RWPE1 (cell line): ENCODE measurements at regions of chr10 and their contacts with region 1.

Region 1: DNA sequence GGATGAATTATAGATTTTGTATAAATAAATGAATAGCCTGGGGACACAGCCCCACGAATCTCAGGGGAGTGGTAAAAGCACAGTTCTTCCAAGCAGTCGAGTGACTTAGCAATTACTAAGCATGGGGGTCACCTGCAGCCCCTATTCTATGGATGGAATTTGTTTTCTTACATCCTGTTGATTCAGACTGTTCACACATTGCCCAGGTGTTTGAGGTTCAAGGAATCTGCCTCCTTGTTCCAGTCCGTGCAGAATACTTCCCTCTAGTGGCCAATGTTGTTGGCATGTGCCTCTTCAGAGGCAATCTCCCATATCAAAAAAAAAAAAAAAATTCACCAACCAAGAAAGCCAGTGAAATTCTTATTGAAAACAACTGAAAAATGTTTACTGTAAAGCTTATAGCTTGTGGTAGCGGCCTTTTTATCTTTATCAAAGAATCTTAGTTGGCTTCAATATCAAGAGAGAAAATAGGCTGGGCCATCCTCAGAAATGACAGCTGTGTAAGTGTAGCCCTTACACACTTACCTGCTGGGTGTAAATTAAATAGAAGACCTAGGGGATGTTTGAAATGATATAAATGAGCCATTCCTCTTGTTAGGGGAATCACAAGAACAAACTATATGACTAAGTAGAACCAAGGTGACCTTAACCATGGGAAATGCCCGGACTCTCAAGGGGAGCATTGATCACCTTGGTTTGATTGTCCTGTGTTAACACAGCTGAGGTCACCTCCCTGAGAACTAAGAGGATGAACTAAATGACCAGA is 7.8 kb downstream of the LIPM start:
- DNase-seq: peak; percentile 63
- H3K27ac ChIP-seq: no peak overlapping the region
- CTCF ChIP-seq: peak; percentile 77

Region 2: DNA sequence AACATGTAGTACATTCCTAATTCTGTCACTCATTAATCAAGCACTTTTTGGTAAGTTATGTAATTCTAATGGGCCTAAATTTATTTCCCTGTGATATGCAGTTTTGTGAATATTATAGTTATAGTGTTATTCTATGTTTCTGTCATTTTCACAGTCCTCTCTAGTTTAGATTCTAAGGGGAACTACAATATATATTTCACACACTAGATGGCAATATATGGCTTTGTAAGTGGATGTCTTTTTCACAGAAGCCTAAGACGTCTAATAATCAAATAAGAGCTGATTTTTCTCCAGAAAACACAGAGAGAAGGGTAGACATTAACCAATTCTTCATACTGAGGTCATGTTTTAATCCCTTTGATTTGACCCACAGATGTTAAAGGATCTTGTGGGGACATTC is 245.3 kb before region 1 on chr10:
- CTCF ChIA-PET with region 1: interaction called, 11 read pairs
- POLR2A ChIA-PET with region 1: no interaction called
- DNase-seq: peak; percentile 51
- H3K27ac ChIP-seq: no peak overlapping the region
- CTCF ChIP-seq: peak; percentile 60

Region 3: DNA sequence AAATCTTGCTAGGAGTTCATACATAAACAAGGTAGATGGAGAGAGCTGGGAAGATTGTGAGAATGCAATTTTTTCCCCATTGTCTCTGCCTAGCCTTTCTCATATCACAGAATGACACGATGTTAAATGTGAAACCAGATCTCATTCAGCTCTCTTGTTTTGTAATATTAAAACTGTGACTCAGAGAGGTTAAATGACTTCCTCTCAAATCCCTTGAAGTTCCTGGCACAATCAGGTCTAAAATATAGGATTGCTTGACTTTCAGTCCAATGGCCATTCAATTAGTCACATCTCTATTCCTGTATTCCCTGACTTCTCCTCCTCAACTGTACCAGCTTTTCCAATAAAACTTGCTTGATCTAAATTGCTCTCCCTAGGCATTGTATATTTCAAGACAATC is 38.1 kb after region 1 on chr10:
- CTCF ChIA-PET with region 1: interaction called, 11 read pairs
- POLR2A ChIA-PET with region 1: no interaction called
- DNase-seq: peak; percentile 56
- H3K27ac ChIP-seq: no peak overlapping the region
- CTCF ChIP-seq: no peak